ENCODE measurements at regions of chr2 and their contacts with region 1.

Region 1: DNA sequence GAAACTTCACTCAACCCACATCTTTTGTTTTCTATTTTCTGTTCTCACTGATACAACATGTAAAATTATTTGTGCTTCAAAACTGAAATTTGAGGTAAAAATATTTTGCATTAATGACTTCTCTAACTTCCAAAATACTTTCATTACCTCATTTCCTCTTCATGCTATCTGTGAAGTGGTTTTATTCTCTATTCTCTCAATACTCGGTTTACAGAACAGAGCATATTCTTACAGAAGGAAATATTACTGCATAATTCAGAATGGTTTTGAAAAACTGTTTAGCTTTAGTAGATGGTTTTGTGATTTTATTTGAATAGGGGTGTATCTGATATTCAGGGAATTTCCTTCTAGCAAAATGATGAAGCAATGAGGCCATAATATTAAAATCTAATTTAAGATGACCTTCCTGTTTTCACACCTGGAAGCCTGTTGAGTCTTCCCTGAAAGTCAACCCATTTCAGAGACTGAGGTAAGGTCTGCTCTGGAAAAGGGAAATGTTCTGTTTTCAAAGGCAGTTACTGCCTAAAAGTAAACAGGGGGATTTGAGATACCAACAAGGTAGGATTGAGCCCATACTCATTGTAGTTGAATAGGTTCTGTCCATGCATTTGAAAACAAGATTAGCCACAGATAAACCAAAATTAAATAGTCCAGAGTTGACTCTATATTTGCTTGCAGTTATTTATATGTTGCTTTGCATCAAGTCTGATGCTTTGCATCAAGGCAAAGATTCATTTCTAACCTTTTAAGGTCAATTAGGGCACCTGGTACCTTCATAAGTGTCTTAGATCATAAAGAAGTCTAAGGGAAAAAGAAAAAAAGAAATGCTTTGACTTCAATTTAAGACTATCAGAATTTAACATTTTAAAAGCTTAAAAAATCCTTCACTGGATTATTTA is 50.8 kb upstream of the PEX13 start:
- DNase-seq: peak; percentile 24
- H3K4me3 ChIP-seq: peak overlapping the region; percentile 43
- H3K27ac ChIP-seq: peak overlapping the region; percentile 69
- H3K4me1 ChIP-seq: peaks cover 71% of the 10 kb centered on the region
- CTCF ChIP-seq: no peak

Region 2: DNA sequence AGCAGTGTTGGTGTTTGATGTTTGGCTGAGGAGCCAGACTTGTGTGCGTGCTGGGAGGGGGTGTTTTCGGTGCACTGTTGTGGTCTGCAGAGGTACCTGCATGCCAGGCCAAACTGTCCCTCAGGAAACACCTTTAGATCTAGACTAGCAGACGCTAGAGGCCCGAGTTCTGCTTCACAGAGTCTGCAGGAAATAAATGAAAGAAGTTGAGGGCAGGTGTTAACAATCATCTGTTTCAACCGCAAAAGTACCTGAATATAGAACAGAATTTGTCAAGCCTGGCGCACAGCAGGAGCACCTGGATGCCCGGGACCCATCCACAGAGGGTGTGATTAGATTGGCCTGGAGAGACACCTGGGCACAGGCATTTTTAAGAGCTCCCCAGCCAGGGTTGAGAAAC is 125.9 kb before region 1 on chr2:
- CTCF ChIA-PET with region 1: no interaction called
- POLR2A ChIA-PET with region 1: interaction called, 15 read pairs
- intact Hi-C with region 1: loop called (anchors 5 kb)
- DNase-seq: peak; percentile 99
- H3K4me3 ChIP-seq: peak overlapping the region; percentile 64
- H3K27ac ChIP-seq: peak overlapping the region; percentile 96
- H3K4me1 ChIP-seq: peaks cover 97% of the 10 kb centered on the region
- CTCF ChIP-seq: no peak

Region 3: GRCh38 chr2:60936757-60937156 is 30.0 kb before region 1 on chr2:
- CTCF ChIA-PET with region 1: no interaction called
- POLR2A ChIA-PET with region 1: interaction called, 10 read pairs
- intact Hi-C with region 1: no loop called
- DNase-seq: no peak
- H3K4me3 ChIP-seq: no peak overlapping the region
- H3K27ac ChIP-seq: no peak overlapping the region
- H3K4me1 ChIP-seq: no peaks in the 10 kb centered on the region
- CTCF ChIP-seq: no peak

Region 4: GRCh38 chr2:60954139-60954538 is 12.6 kb before region 1 on chr2:
- CTCF ChIA-PET with region 1: no interaction called
- POLR2A ChIA-PET with region 1: interaction called, 21 read pairs
- intact Hi-C with region 1: no loop called
- DNase-seq: no peak
- H3K4me3 ChIP-seq: no peak overlapping the region
- H3K27ac ChIP-seq: no peak overlapping the region
- H3K4me1 ChIP-seq: no peaks in the 10 kb centered on the region
- CTCF ChIP-seq: no peak

Region 5: GRCh38 chr2:60976875-60977561 is 10.3 kb after region 1 on chr2:
- CTCF ChIA-PET with region 1: no interaction called
- POLR2A ChIA-PET with region 1: interaction called, 14 read pairs
- intact Hi-C with region 1: no loop called
- DNase-seq: no peak
- H3K4me3 ChIP-seq: no peak overlapping the region
- H3K27ac ChIP-seq: peak overlapping the region; percentile 19
- H3K4me1 ChIP-seq: peaks cover 69% of the 10 kb centered on the region
- CTCF ChIP-seq: no peak

Region 6: DNA sequence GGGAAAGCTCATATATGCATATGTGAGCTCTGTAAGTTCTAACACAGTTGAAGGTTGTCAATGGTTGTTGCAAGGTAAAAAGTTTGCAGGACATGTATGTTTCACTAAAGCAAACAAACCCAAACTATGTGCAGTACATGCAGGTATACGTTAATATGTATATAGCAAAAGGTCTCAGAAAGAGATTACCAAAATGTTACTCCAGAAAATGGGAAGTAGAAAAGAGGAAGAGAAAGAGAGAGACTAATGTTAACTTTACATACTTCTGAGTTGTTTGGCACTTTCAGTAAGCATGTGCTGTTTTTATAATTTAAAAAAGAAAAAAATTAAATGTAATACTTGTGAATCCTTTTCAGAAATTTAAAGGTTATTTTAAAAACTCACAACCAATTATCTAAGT is 18.0 kb after region 1 on chr2:
- CTCF ChIA-PET with region 1: interaction called, 3 read pairs
- POLR2A ChIA-PET with region 1: interaction called, 17 read pairs
- intact Hi-C with region 1: no loop called
- DNase-seq: peak; percentile 65
- H3K4me3 ChIP-seq: peak overlapping the region; percentile 51
- H3K27ac ChIP-seq: peak overlapping the region; percentile 81
- H3K4me1 ChIP-seq: peaks cover 68% of the 10 kb centered on the region
- CTCF ChIP-seq: no peak

Region 7: DNA sequence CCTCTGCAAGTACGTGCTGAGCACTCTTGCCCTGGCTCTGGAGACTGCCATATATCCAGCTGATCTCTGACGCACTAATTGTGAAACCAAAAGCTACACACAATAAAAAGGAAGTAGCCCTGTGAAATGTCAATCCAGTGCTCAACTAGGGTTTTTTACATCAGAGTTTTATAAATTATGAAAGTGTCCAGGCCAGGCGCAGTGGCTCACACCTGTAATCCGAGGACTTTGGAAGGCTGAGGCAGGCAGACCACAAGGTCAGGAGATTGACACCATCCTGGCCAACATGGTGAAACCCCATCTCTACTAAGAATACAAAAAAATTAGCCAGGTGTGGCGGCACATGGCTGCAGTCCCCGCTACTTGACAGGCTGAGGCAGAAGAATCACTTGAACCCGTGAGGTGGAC is 26.2 kb after region 1 on chr2:
- CTCF ChIA-PET with region 1: no interaction called
- POLR2A ChIA-PET with region 1: interaction called, 17 read pairs
- intact Hi-C with region 1: no loop called
- DNase-seq: peak; percentile 54
- H3K4me3 ChIP-seq: no peak overlapping the region
- H3K27ac ChIP-seq: no peak overlapping the region
- H3K4me1 ChIP-seq: peaks cover 53% of the 10 kb centered on the region
- CTCF ChIP-seq: no peak

Region 8: DNA sequence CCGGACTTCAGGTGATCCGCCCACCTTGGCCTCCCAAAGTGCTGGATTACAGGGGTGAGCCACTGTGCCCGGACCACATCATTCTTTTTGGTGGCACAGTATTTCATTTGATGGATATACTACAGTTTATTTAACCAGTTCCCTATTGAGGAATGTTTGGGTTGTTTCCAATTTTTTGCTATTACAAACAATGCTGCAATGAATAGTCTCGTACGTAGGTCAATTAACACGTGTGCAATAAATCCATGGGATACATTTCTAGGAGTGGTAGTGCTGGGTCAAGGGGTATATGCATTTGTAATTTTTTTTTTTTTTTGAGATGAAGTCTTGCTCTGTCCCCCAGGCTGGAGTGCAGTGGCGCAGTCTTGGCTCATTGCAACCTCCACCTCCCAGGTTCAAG is 599.8 kb after region 1 on chr2:
- CTCF ChIA-PET with region 1: no interaction called
- POLR2A ChIA-PET with region 1: no interaction called
- intact Hi-C with region 1: no loop called
- DNase-seq: no peak
- H3K4me3 ChIP-seq: no peak overlapping the region
- H3K27ac ChIP-seq: no peak overlapping the region
- H3K4me1 ChIP-seq: no peaks in the 10 kb centered on the region
- CTCF ChIP-seq: no peak